Heart right ventricle (tissue), 16 donors: ENCODE measurements at regions of chr9 and their contacts with region 1.

Region 1: GRCh38 chr9:40884072-40884901 is 244.2 kb downstream of the FOXD4L6 start:
- DNase-seq: peak in 1 of 2 donors; percentile 16
- ATAC-seq: peak in 3 of 8 donors; percentile 19 to 64 (median 49)
- H3K4me3 ChIP-seq: no peak overlapping the region
- H3K27ac ChIP-seq: no peak overlapping the region
- H3K4me1 ChIP-seq: no peaks in the 10 kb centered on the region
- H3K27me3 ChIP-seq: no peaks in the 10 kb centered on the region
- CTCF ChIP-seq: no peak

Region 2: GRCh38 chr9:40914772-40915667 is 30.7 kb after region 1 on chr9:
- intact Hi-C with region 1: loop called in 2 of 10 experiments (anchors 5 to 10 kb)
- DNase-seq: no peak
- ATAC-seq: peak in 5 of 8 donors; percentile 20 to 48 (median 32)
- H3K4me3 ChIP-seq: no peak overlapping the region
- H3K27ac ChIP-seq: no peak overlapping the region
- H3K4me1 ChIP-seq: no peaks in the 10 kb centered on the region
- H3K27me3 ChIP-seq: no peaks in the 10 kb centered on the region
- CTCF ChIP-seq: no peak

Region 3: DNA sequence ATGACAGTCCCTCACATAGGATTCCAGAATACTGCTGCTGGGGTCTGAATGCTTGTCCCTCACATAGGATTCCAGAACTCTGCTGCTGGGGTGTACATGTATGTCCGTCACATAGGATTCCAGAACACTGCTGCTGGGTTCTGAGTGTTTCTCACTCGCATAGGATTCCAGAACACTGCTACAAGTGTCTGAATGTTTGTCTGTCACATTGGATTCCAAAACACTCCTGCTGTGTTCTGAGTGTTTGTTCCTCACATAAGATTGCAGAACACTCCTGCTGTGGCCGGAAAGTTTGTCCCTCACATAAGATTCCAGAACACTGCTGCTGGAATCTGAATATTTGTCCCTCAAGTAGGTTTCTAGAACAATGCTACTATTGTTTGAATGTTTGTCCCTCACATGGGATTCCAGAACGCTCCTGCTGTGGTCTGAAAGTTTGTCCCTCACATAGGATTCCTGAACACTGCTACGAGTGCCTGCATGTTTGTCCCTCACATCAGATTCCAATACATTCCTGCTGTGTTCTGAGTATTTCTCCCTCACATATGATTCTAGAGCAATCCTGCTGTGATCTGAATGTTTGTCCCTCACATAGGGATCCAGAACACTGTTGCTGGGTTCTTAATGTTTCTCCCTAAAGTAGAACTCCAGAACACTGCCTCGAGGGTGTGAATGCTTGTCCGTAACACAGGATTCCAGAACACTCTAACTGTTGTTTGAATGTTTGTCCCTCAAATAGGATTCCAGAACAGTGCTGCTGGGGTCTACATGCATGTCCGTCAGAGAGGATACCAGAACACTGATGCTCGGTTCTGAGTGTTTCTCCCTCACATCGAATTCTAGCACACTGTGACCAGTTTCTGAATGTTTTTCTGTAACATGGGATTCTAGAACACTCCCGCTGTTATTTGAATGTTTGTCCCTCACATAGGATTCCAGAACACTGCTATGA is 43.8 kb after region 1 on chr9:
- intact Hi-C with region 1: loop called in 1 of 10 experiments (anchors 10 kb)
- DNase-seq: no peak
- ATAC-seq: peak in 1 of 8 donors; percentile 22
- H3K4me3 ChIP-seq: no peak overlapping the region
- H3K27ac ChIP-seq: no peak overlapping the region
- H3K4me1 ChIP-seq: no peaks in the 10 kb centered on the region
- H3K27me3 ChIP-seq: no peaks in the 10 kb centered on the region
- CTCF ChIP-seq: no peak